Endothelial cell of umbilical vein (primary cell): ENCODE measurements at regions of chr5 and their contacts with region 1.

Region 1: DNA sequence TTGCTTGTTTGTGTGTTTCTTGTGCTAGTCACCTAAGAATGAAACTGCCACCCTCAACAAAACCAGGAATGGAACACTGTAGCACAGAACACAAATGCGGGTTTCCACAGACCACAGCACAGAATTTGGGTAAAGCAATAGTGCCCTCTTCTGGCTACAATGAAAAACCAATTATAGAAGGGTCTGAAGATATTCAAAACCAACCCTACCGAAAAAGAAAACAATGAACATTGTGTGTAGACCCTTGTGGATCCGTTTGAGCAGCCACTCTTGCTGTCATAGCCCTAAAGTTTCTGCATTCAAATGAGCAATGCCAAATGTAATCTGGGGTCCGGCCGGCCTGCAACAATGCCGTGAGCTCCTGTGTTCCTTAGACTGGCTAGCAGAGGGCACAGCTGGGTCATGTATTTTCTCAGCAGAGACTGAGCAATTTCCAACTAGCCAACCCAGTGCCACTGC is 8.3 kb upstream of the ENC1 start:
- DNase-seq: peak; percentile 69
- H3K4me3 ChIP-seq: no peak overlapping the region
- H3K27ac ChIP-seq: no peak overlapping the region
- H3K4me1 ChIP-seq: peaks cover 5% of the 10 kb centered on the region
- H3K27me3 ChIP-seq: no peaks in the 10 kb centered on the region
- CTCF ChIP-seq: peak; percentile 46 to 50
- POLR2A ChIP-seq: no peak

Region 2: DNA sequence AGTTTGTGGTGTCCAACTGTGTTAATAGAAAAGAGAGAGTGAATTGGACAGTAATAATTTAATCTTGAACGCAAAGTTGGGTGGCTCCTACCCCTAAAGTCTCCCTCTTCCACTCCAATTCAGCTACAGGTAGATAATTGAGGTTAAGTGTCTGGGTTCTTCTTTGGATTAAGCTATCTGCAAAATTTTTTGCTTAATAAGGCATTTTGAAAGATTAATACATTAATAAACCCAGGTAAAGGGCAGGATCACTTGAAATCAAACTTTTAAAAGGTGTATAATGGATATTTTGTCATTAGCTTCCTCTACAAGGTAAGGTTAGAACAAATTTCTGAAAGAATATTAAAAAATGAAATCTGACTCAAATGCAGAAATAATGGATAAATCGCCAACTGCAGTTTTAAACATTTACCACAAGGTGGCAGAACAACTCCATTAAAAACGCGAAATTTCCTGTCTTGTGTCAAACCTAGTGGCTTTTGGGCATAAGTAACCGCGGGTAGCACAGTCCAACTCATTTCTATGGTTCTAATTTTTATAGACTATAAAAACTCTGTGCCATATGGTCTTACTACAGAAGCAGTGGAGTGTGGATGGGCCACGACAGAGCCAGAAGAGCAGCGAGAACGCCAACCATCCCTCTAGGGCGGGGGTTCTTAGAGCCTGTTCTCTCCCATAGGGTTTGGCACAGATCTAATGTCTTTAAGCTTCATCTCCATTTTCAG is 746.4 kb before region 1 on chr5:
- CTCF ChIA-PET with region 1: interaction called, 78 read pairs
- POLR2A ChIA-PET with region 1: no interaction called
- dilution Hi-C with region 1: no loop called
- intact Hi-C with region 1: loop called (anchors 1 kb)
- DNase-seq: peak; percentile 62
- H3K4me3 ChIP-seq: no peak overlapping the region
- H3K27ac ChIP-seq: no peak overlapping the region
- H3K4me1 ChIP-seq: no peaks in the 10 kb centered on the region
- H3K27me3 ChIP-seq: no peaks in the 10 kb centered on the region
- CTCF ChIP-seq: peak; percentile 42 to 45
- POLR2A ChIP-seq: no peak

Region 3: DNA sequence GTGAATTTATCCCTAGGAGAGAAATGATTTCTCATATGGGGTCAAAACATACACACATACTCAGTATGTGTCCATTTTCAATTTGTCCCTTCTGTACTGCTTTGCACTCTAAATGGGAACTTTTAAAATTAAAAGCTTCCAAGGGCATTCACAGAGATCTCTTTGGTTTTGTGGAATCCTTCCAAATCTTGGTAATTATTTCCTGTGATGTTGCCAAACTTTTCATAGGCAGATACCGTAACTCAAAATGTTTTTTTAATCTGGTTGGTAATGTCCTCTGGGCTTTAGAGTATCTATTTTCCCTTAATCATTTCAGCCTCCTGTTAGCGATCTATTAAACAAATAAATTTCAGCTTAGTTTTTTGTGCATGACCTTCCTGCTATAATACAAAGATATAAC is 740.5 kb before region 1 on chr5:
- CTCF ChIA-PET with region 1: interaction called, 78 read pairs
- POLR2A ChIA-PET with region 1: no interaction called
- dilution Hi-C with region 1: no loop called
- intact Hi-C with region 1: no loop called
- DNase-seq: peak; percentile 26
- H3K4me3 ChIP-seq: no peak overlapping the region
- H3K27ac ChIP-seq: no peak overlapping the region
- H3K4me1 ChIP-seq: no peaks in the 10 kb centered on the region
- H3K27me3 ChIP-seq: no peaks in the 10 kb centered on the region
- CTCF ChIP-seq: no peak
- POLR2A ChIP-seq: no peak

Region 4: GRCh38 chr5:73945498-73945897 is 703.4 kb before region 1 on chr5:
- CTCF ChIA-PET with region 1: interaction called, 8 read pairs
- POLR2A ChIA-PET with region 1: no interaction called
- dilution Hi-C with region 1: no loop called
- intact Hi-C with region 1: loop called (anchors 2 kb)
- DNase-seq: no peak
- H3K4me3 ChIP-seq: no peak overlapping the region
- H3K27ac ChIP-seq: no peak overlapping the region
- H3K4me1 ChIP-seq: peaks cover 4% of the 10 kb centered on the region
- H3K27me3 ChIP-seq: no peaks in the 10 kb centered on the region
- CTCF ChIP-seq: peak; percentile 27 to 34
- POLR2A ChIP-seq: no peak

Region 5: GRCh38 chr5:73985145-73985544 is 663.7 kb before region 1 on chr5:
- CTCF ChIA-PET with region 1: interaction called, 8 read pairs
- POLR2A ChIA-PET with region 1: no interaction called
- dilution Hi-C with region 1: no loop called
- intact Hi-C with region 1: loop called (anchors 1 kb)
- DNase-seq: peak; percentile 59
- H3K4me3 ChIP-seq: no peak overlapping the region
- H3K27ac ChIP-seq: no peak overlapping the region
- H3K4me1 ChIP-seq: no peaks in the 10 kb centered on the region
- H3K27me3 ChIP-seq: peaks cover 11 to 20% of the 10 kb centered on the region in 2 experiments
- CTCF ChIP-seq: peak; percentile 22 to 41
- POLR2A ChIP-seq: no peak

Region 6: DNA sequence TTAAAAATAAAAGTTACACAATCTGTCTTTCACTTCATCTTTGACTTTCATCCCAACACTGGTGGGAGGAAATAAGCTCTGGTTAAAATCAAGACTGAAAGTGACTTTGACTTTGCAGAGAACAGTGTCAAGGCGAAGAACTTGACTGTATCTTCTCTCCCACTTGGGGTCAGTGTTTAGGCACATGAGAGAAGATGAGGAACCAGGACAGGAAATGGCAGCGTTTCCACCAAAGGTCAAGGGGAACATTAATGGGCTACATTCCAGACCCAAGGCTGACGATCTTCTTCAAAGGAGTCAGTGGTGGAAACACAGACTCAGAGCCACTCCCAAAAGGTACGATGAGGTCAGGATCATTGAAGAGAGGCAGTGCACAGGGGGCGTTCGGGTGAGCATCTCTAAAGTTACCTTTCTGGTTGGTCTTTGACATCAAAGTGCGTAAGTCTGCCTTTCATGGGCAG is 613.3 kb before region 1 on chr5:
- CTCF ChIA-PET with region 1: interaction called, 19 read pairs
- POLR2A ChIA-PET with region 1: no interaction called
- dilution Hi-C with region 1: no loop called
- intact Hi-C with region 1: loop called (anchors 1 kb)
- DNase-seq: peak; percentile 57
- H3K4me3 ChIP-seq: no peak overlapping the region
- H3K27ac ChIP-seq: no peak overlapping the region
- H3K4me1 ChIP-seq: peaks cover 2% of the 10 kb centered on the region
- H3K27me3 ChIP-seq: peaks cover 0 to 2% of the 10 kb centered on the region in 2 experiments
- CTCF ChIP-seq: peak in 1 of 2 donors; percentile 27
- POLR2A ChIP-seq: no peak

Region 7: DNA sequence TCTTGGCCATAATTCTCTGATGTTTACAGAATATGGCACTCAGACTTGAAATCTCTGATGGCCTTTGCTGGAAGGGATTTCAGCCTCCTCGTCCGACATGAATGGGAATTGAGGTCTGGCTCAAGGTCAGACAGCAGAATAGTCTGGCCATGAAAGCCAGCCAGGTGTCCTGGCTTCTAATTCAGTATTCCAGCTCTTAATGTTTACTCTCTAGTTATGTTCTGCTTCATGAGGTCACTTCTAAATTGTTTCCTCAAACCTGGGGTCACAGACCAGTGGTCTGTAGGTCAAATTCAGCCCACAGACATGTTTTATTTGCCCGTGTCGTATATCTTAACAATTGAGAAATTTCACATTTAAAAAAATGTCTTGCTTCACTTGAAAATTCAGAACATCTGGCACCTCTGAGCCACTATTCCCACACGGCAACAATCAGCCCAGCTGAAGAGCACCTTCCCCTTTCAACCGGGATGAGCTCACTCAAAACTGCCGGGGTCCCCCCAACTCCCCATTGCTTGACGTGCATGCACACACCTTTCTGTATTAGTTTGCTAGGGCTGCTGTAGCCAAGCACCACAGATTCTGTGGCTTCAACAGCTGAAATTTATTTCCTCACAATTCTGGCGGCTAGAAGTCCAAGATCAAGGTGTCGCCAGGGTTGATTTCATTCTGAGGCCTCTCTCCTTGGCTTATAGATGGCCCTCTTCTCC is 251.8 kb before region 1 on chr5:
- CTCF ChIA-PET with region 1: no interaction called
- POLR2A ChIA-PET with region 1: no interaction called
- dilution Hi-C with region 1: no loop called
- intact Hi-C with region 1: no loop called
- DNase-seq: peak; percentile 58
- H3K4me3 ChIP-seq: no peak overlapping the region
- H3K27ac ChIP-seq: no peak overlapping the region
- H3K4me1 ChIP-seq: peaks cover 4% of the 10 kb centered on the region
- H3K27me3 ChIP-seq: no peaks in the 10 kb centered on the region
- CTCF ChIP-seq: no peak
- POLR2A ChIP-seq: no peak

Region 8: GRCh38 chr5:74622122-74622521 is 26.7 kb before region 1 on chr5:
- CTCF ChIA-PET with region 1: no interaction called
- POLR2A ChIA-PET with region 1: no interaction called
- dilution Hi-C with region 1: no loop called
- intact Hi-C with region 1: no loop called
- DNase-seq: no peak
- H3K4me3 ChIP-seq: no peak overlapping the region
- H3K27ac ChIP-seq: no peak overlapping the region
- H3K4me1 ChIP-seq: peaks cover 3% of the 10 kb centered on the region
- H3K27me3 ChIP-seq: no peaks in the 10 kb centered on the region
- CTCF ChIP-seq: no peak
- POLR2A ChIP-seq: no peak